Ascending aorta (tissue), 2 donors: ENCODE measurements at regions of chr1 and their contacts with region 1.

Region 1: GRCh38 chr1:233304489-233305102 is 9.1 kb upstream of the PCNX2 start:
- DNase-seq: no peak
- H3K4me3 ChIP-seq: no peak overlapping the region
- H3K27ac ChIP-seq: no peak overlapping the region
- H3K4me1 ChIP-seq: no peaks in the 10 kb centered on the region
- H3K27me3 ChIP-seq: no peaks in the 10 kb centered on the region
- CTCF ChIP-seq: peak; percentile 33 to 78 (median 62)

Region 2: DNA sequence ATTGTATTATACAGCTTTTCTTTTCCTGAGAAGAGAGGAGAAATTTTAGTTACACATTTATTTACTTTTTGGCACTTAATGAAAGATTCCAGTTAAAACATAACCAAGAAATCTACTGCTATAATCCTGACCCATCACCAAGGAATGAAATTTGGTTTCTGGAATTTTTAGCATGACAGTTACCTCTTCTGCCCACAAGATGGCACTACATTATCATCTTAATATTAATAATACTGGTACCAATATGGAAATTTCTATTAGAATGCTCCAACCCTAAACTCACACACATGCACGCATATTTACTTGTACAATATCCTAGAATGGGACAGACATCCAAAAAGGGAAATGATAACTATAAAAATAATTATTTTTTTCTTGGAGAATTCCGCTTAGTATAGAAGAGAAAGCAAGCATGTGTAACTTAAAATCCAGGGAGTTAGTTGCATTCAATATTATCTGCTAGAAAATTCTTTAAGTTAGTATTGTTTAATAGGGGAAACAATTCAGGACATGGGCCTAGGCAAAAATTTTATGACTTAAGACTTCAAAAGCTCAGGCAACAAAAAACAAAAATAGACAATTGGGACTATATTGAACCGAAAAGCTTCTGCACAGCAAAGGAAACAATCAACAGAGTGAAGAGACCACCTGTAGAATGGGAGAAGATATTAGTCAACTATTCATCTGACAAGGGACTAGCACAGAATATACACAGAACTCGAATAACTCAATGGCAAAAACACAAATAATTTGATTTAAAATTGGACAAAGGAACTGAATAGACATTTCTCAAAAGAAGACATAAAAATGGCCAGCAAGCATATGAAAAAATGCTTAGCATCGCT is 60.3 kb after region 1 on chr1:
- intact Hi-C with region 1: loop called (anchors 5 kb)
- DNase-seq: no peak
- H3K4me3 ChIP-seq: no peak overlapping the region
- H3K27ac ChIP-seq: no peak overlapping the region
- H3K4me1 ChIP-seq: no peaks in the 10 kb centered on the region
- H3K27me3 ChIP-seq: no peaks in the 10 kb centered on the region
- CTCF ChIP-seq: peak; percentile 15 to 67 (median 60)

Region 3: GRCh38 chr1:233662575-233663304 is 358.1 kb after region 1 on chr1:
- intact Hi-C with region 1: no loop called
- DNase-seq: no peak
- H3K4me3 ChIP-seq: no peak overlapping the region
- H3K27ac ChIP-seq: no peak overlapping the region
- H3K4me1 ChIP-seq: peaks cover 0 to 14% of the 10 kb centered on the region in 2 donors
- H3K27me3 ChIP-seq: no peaks in the 10 kb centered on the region
- CTCF ChIP-seq: no peak